PC-3 (cell line): ENCODE measurements at regions of chr5 and their contacts with region 1.

Region 1: GRCh38 chr5:116273448-116274207 is 188.8 kb downstream of the COMMD10 start:
- DNase-seq: peak; percentile 48
- ATAC-seq: peak; percentile 88
- H3K4me3 ChIP-seq: no peak overlapping the region
- H3K27ac ChIP-seq: peak overlapping the region; percentile 59
- H3K4me1 ChIP-seq: peaks cover 18% of the 10 kb centered on the region
- H3K27me3 ChIP-seq: no peaks in the 10 kb centered on the region
- CTCF ChIP-seq: no peak

Region 2: DNA sequence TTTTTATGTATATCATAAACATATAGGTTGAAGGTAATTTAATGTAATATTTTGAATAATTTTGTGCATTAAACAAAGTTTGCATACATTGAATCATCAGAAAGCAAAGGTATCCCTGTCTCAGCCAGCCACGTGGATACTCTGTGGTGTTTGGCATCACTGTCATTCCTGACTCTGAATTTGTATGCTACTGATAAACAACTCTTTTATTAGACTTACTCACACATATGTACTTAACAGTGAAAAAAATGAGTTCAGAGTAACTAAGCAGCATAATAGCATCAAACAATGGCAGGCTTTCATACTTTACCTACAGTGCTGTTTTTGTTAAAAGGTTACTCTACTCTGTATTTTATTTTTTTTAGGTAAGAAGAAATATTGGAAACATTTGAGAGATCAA is 16.9 kb before region 1 on chr5:
- CTCF ChIA-PET with region 1: interaction called, 3 read pairs
- POLR2A ChIA-PET with region 1: no interaction called
- intact Hi-C with region 1: loop called (anchors 2 kb)
- DNase-seq: peak; percentile 56
- ATAC-seq: peak; percentile 99
- H3K4me3 ChIP-seq: no peak overlapping the region
- H3K27ac ChIP-seq: no peak overlapping the region
- H3K4me1 ChIP-seq: no peaks in the 10 kb centered on the region
- H3K27me3 ChIP-seq: no peaks in the 10 kb centered on the region
- CTCF ChIP-seq: no peak